Mammary epithelial cell (primary cell): ENCODE measurements at regions of chr1 and their contacts with region 1.

Region 1: DNA sequence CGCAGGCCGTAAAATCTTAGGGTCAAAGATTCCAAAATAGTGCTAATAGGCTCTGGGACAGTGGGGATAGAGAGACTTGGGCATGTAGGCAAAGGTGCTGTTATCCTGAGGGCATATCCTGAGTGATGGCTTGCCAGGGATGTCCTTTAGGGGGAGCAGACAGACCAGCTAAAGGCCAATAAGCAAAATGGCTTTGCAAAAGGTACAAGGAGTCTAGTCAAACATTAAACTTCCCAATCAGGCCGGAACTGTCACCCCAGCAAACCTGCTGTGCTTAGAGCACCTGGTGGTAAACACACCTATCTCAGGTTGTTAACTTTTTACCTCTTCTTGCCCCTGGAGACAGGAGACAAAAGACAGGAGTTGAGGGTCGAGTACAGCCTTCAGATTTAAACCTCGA is 49.1 kb downstream of the TRABD2B start:
- DNase-seq: peak; percentile 27
- H3K4me3 ChIP-seq: no peak overlapping the region
- H3K27ac ChIP-seq: no peak overlapping the region
- H3K4me1 ChIP-seq: peaks cover 12% of the 10 kb centered on the region
- H3K27me3 ChIP-seq: no peaks in the 10 kb centered on the region
- CTCF ChIP-seq: peak; percentile 33 to 40

Region 2: GRCh38 chr1:47763591-47764171 is 184.4 kb before region 1 on chr1:
- CTCF ChIA-PET with region 1: no interaction called
- dilution Hi-C with region 1: loop called (anchors 5 kb)
- in situ Hi-C with region 1: no loop called
- intact Hi-C with region 1: no loop called
- DNase-seq: peak; percentile 73
- H3K4me3 ChIP-seq: no peak overlapping the region
- H3K27ac ChIP-seq: no peak overlapping the region
- H3K4me1 ChIP-seq: peaks cover 17% of the 10 kb centered on the region
- H3K27me3 ChIP-seq: no peaks in the 10 kb centered on the region
- CTCF ChIP-seq: no peak

Region 3: GRCh38 chr1:47986761-47987200 is 38.7 kb after region 1 on chr1:
- CTCF ChIA-PET with region 1: no interaction called
- dilution Hi-C with region 1: no loop called
- in situ Hi-C with region 1: no loop called
- intact Hi-C with region 1: no loop called
- DNase-seq: no peak
- H3K4me3 ChIP-seq: no peak overlapping the region
- H3K27ac ChIP-seq: no peak overlapping the region
- H3K4me1 ChIP-seq: peaks cover 4% of the 10 kb centered on the region
- H3K27me3 ChIP-seq: no peaks in the 10 kb centered on the region
- CTCF ChIP-seq: no peak